Activated naive CD4-positive, alpha-beta T cell treated with anti-CD3 and anti-CD28 coated beads for 36 hours (primary cell): ENCODE measurements at regions of chrX and their contacts with region 1.

Region 1: GRCh38 chrX:109270580-109271484 is 211.1 kb downstream of the GUCY2F start:
- DNase-seq: peak; percentile 60
- H3K4me3 Mint-ChIP-seq: no peak overlapping the region
- H3K27ac Mint-ChIP-seq: peak overlapping the region; percentile 61
- H3K4me1 Mint-ChIP-seq: peaks cover 6% of the 10 kb centered on the region
- H3K27me3 Mint-ChIP-seq: no peaks in the 10 kb centered on the region

Region 2: GRCh38 chrX:108036298-108036973 is 1234.4 kb before region 1 on chrX:
- CTCF ChIA-PET with region 1: no interaction called
- intact Hi-C with region 1: loop called (anchors 10 kb)
- DNase-seq: no peak
- H3K4me3 Mint-ChIP-seq: no peak overlapping the region
- H3K27ac Mint-ChIP-seq: no peak overlapping the region
- H3K4me1 Mint-ChIP-seq: peaks cover 53% of the 10 kb centered on the region
- H3K27me3 Mint-ChIP-seq: no peaks in the 10 kb centered on the region

Region 3: GRCh38 chrX:109327251-109327650 is 56.4 kb after region 1 on chrX:
- CTCF ChIA-PET with region 1: no interaction called
- intact Hi-C with region 1: no loop called
- DNase-seq: no peak
- H3K4me3 Mint-ChIP-seq: no peak overlapping the region
- H3K27ac Mint-ChIP-seq: no peak overlapping the region
- H3K4me1 Mint-ChIP-seq: no peaks in the 10 kb centered on the region
- H3K27me3 Mint-ChIP-seq: no peaks in the 10 kb centered on the region

Region 4: GRCh38 chrX:109347632-109348031 is 76.8 kb after region 1 on chrX:
- CTCF ChIA-PET with region 1: no interaction called
- intact Hi-C with region 1: loop called (anchors 1 kb)
- DNase-seq: peak; percentile 11
- H3K4me3 Mint-ChIP-seq: no peak overlapping the region
- H3K27ac Mint-ChIP-seq: no peak overlapping the region
- H3K4me1 Mint-ChIP-seq: peaks cover 2% of the 10 kb centered on the region
- H3K27me3 Mint-ChIP-seq: no peaks in the 10 kb centered on the region

Region 5: GRCh38 chrX:109475174-109475891 is 204.5 kb after region 1 on chrX:
- CTCF ChIA-PET with region 1: no interaction called
- intact Hi-C with region 1: loop called (anchors 2 kb)
- DNase-seq: peak; percentile 34
- H3K4me3 Mint-ChIP-seq: no peak overlapping the region
- H3K27ac Mint-ChIP-seq: no peak overlapping the region
- H3K4me1 Mint-ChIP-seq: peaks cover 7% of the 10 kb centered on the region
- H3K27me3 Mint-ChIP-seq: no peaks in the 10 kb centered on the region

Region 6: DNA sequence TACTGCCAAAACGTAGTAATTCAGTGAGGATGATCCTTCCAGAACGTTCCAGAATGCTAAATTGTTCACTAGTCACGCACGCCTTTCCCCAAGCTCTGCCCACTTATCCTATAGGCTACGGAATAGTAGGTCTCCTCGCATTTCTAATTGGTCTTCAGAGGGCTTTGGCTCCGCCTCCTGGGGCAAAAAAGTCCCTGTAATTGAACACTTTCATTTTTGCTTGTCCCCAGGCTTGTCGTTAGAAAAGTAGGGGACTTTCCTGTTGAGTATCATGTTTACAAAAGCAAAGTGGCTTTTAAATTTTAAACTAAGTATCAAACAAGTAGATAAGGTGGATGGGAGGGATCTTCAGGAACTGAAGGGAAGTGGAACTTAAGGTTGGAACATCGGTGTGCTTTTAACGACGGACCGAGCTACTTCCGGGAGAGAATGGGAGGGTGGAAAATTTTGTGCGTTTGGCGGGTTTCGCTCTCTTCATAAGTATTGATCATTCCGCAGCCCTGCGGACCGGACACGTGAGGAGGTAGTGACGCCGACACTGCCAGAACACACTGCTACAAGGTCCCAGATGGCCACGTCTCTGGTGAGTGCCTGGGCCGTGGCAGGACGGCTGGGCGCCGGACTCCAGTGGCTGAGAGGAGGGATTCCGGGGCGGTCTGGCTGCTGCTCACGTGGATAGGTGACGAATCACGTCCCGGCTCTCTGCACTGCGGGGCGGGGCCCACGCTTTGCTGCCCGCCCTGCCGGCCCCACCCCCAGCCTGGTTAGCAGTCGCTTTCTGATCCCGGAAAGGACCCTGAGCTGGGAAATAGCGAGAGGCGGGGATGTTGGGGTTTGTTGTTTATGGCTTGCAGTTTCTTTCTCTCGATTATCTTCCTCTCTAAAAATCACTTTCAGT is 265.9 kb after region 1 on chrX and contains the start of gene NXT2:
- CTCF ChIA-PET with region 1: no interaction called
- intact Hi-C with region 1: loop called (anchors 1 kb)
- DNase-seq: peak; percentile 89
- H3K4me3 Mint-ChIP-seq: peak within 1 kb of the TSS; percentile 95
- H3K27ac Mint-ChIP-seq: peak within 1 kb of the TSS; percentile 98
- H3K4me1 Mint-ChIP-seq: peaks cover 19% of the 10 kb centered on the region
- H3K27me3 Mint-ChIP-seq: no peaks in the 10 kb centered on the region
- total RNA-seq, gene NXT2: 14.8 to 14.9 TPM

Region 7: DNA sequence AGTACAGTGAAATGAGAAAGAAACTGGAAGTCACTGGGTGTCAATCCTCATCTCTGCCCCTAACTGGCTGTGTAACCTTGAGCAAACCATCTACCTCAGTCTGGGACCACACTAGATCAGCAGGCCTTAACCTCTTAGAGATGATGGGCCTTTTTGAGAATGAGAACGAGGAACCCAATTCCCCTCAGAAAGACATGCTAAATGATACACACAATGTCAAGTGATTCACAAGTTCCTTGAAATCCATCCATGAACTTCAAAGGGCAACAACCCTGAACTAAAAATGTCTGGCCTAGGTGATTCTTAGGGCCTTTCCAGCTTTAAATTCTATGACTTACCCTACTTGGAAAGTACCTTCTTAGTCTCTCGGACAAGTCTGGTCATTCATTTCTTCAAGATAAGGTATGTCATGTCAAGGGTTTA is 414.8 kb after region 1 on chrX:
- CTCF ChIA-PET with region 1: no interaction called
- intact Hi-C with region 1: loop called (anchors 5 kb)
- DNase-seq: peak; percentile 55
- H3K4me3 Mint-ChIP-seq: no peak overlapping the region
- H3K27ac Mint-ChIP-seq: peak overlapping the region; percentile 89
- H3K4me1 Mint-ChIP-seq: peaks cover 33% of the 10 kb centered on the region
- H3K27me3 Mint-ChIP-seq: no peaks in the 10 kb centered on the region

Region 8: GRCh38 chrX:109714340-109714958 is 443.6 kb after region 1 on chrX:
- CTCF ChIA-PET with region 1: no interaction called
- intact Hi-C with region 1: loop called (anchors 5 kb)
- DNase-seq: no peak
- H3K4me3 Mint-ChIP-seq: no peak overlapping the region
- H3K27ac Mint-ChIP-seq: no peak overlapping the region
- H3K4me1 Mint-ChIP-seq: peaks cover 46% of the 10 kb centered on the region
- H3K27me3 Mint-ChIP-seq: no peaks in the 10 kb centered on the region